ENCODE measurements at regions of chr6 and their contacts with region 1.

Region 1: DNA sequence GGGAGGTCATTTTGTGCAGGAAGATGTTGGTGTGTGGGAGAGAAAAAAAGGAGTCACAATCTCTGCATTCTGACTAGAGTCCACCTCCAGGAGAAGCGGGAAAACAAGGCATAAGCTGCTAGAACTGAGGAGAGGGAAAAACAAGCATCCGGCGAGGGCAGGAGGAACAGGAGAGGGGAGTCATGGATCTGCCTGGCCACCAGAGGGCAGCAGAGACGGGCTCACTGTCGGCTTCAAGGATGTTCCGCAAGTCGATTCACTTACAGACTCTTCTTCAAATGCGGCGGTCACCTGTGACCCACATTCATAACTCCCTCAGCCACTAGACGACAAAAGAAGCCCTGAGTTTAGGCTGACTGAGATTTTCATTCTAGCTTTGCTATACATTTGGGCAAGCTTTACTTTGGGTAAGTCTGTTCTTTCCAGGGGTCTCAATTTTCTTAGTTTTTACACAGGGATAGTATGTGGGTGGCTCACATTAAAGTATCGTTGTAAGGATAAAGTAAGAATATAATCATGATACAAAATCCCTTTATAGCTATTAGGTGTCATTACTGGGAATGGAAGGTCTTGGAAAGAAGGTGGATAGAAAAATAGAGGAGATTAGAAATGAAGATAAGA is 6.6 kb upstream of the BTNL2 start:
- DNase-seq: peak; percentile 80
- ATAC-seq: peak; percentile 88
- H3K4me3 Mint-ChIP-seq: peak overlapping the region; percentile 75
- H3K27ac Mint-ChIP-seq: peak overlapping the region; percentile 5
- H3K4me1 Mint-ChIP-seq: peaks cover 14% of the 10 kb centered on the region
- H3K27me3 Mint-ChIP-seq: peaks cover 4% of the 10 kb centered on the region
- CTCF ChIP-seq: no peak

Region 2: GRCh38 chr6:32244946-32245398 is 168.6 kb before region 1 on chr6:
- CTCF ChIA-PET with region 1: interaction called, 64 read pairs
- POLR2A ChIA-PET with region 1: no interaction called
- intact Hi-C with region 1: loop called (anchors 1 kb)
- DNase-seq: peak; percentile 77
- ATAC-seq: peak; percentile 91
- H3K4me3 Mint-ChIP-seq: peak overlapping the region; percentile 81
- H3K27ac Mint-ChIP-seq: peak overlapping the region; percentile 50
- H3K4me1 Mint-ChIP-seq: peaks cover 16% of the 10 kb centered on the region
- H3K27me3 Mint-ChIP-seq: no peaks in the 10 kb centered on the region
- CTCF ChIP-seq: no peak

Region 3: DNA sequence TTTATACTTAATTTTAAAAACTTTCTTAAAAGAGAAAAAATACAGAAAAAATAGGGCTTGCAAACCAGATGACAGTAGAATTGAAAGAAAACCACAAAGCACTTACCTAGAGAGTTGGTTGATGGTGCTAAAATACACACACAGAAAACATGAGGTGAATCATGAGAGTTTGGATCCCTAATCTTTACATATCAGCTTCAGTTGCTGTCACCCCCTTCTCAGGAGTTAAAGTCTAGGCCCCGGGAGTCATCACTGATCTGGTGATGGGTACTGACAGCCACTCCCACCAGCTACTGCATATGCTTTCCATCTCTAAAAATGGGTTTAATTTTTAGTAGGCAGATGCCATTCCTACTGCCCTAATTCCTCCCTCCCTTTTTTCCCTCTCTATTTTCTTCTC is 58.5 kb before region 1 on chr6:
- CTCF ChIA-PET with region 1: no interaction called
- POLR2A ChIA-PET with region 1: no interaction called
- intact Hi-C with region 1: no loop called
- DNase-seq: no peak
- ATAC-seq: no peak
- H3K4me3 Mint-ChIP-seq: no peak overlapping the region
- H3K27ac Mint-ChIP-seq: no peak overlapping the region
- H3K4me1 Mint-ChIP-seq: peaks cover 12% of the 10 kb centered on the region
- H3K27me3 Mint-ChIP-seq: no peaks in the 10 kb centered on the region
- CTCF ChIP-seq: no peak

Region 4: GRCh38 chr6:32402812-32403211 is 10.7 kb before region 1 on chr6:
- CTCF ChIA-PET with region 1: interaction called, 13 read pairs
- POLR2A ChIA-PET with region 1: no interaction called
- intact Hi-C with region 1: no loop called
- DNase-seq: no peak
- ATAC-seq: no peak
- H3K4me3 Mint-ChIP-seq: no peak overlapping the region
- H3K27ac Mint-ChIP-seq: no peak overlapping the region
- H3K4me1 Mint-ChIP-seq: peaks cover 9% of the 10 kb centered on the region
- H3K27me3 Mint-ChIP-seq: peaks cover 2% of the 10 kb centered on the region
- CTCF ChIP-seq: no peak

Region 5: GRCh38 chr6:32432050-32432450 is 18.5 kb after region 1 on chr6:
- CTCF ChIA-PET with region 1: interaction called, 22 read pairs
- POLR2A ChIA-PET with region 1: interaction called, 4 read pairs
- intact Hi-C with region 1: loop called (anchors 1 kb)
- DNase-seq: no peak
- ATAC-seq: peak; percentile 43
- H3K4me3 Mint-ChIP-seq: no peak overlapping the region
- H3K27ac Mint-ChIP-seq: peak overlapping the region; percentile 24
- H3K4me1 Mint-ChIP-seq: peaks cover 33% of the 10 kb centered on the region
- H3K27me3 Mint-ChIP-seq: no peaks in the 10 kb centered on the region
- CTCF ChIP-seq: peak; percentile 65

Region 6: DNA sequence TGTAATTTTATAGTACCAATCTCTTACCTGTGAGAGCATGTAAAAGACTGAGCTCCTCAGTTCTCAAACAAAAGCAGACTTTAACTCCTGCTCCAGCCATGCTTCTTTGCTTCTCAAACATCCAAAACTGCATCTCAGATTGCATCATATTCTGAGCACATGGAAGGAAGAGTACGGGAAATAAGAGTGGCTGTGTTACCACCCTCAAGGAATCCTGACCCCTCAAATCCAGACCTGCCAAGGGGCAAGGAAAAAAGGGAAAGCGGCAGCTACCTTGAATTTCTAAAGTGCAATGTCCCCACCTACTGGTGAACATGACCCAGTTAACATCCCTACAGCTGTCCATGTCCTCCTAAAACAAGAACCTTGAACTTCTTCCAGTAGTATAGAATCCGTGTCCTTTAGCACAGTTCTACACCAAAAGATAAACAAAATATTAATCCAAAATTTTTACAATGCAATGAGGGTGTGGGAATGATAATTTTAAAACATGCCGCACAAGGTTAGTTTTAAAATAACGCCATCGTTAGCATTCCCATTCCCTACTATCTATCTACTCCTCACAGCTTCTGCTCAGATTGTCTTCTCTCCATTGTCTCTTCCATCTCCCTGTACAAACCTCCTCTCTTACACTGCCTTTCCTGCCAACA is 287.0 kb after region 1 on chr6:
- CTCF ChIA-PET with region 1: interaction called, 47 read pairs
- POLR2A ChIA-PET with region 1: no interaction called
- intact Hi-C with region 1: loop called (anchors 1 kb)
- DNase-seq: no peak
- ATAC-seq: peak; percentile 80
- H3K4me3 Mint-ChIP-seq: peak overlapping the region; percentile 86
- H3K27ac Mint-ChIP-seq: peak overlapping the region; percentile 91
- H3K4me1 Mint-ChIP-seq: peaks cover 32% of the 10 kb centered on the region
- H3K27me3 Mint-ChIP-seq: no peaks in the 10 kb centered on the region
- CTCF ChIP-seq: peak; percentile 32

Region 7: GRCh38 chr6:32785781-32786533 is 372.4 kb after region 1 on chr6:
- CTCF ChIA-PET with region 1: interaction called, 149 read pairs
- POLR2A ChIA-PET with region 1: no interaction called
- intact Hi-C with region 1: loop called (anchors 1 kb)
- DNase-seq: no peak
- ATAC-seq: peak; percentile 88
- H3K4me3 Mint-ChIP-seq: no peak overlapping the region
- H3K27ac Mint-ChIP-seq: no peak overlapping the region
- H3K4me1 Mint-ChIP-seq: peaks cover 2% of the 10 kb centered on the region
- H3K27me3 Mint-ChIP-seq: no peaks in the 10 kb centered on the region
- CTCF ChIP-seq: no peak

Region 8: GRCh38 chr6:32947552-32948465 is 534.3 kb after region 1 on chr6:
- CTCF ChIA-PET with region 1: no interaction called
- POLR2A ChIA-PET with region 1: no interaction called
- intact Hi-C with region 1: no loop called
- DNase-seq: no peak
- ATAC-seq: no peak
- H3K4me3 Mint-ChIP-seq: peak overlapping the region; percentile 98
- H3K27ac Mint-ChIP-seq: peak overlapping the region; percentile 99
- H3K4me1 Mint-ChIP-seq: peaks cover 94% of the 10 kb centered on the region
- H3K27me3 Mint-ChIP-seq: no peaks in the 10 kb centered on the region
- CTCF ChIP-seq: no peak

Region 9: GRCh38 chr6:33075568-33076405 is 662.2 kb after region 1 on chr6 and contains the start of gene HLA-DPB1:
- CTCF ChIA-PET with region 1: no interaction called
- POLR2A ChIA-PET with region 1: no interaction called
- intact Hi-C with region 1: no loop called
- DNase-seq: peak; percentile 42
- ATAC-seq: peak; percentile 76
- H3K4me3 Mint-ChIP-seq: peak within 1 kb of the TSS; percentile 95
- H3K27ac Mint-ChIP-seq: peak within 1 kb of the TSS; percentile 99
- H3K4me1 Mint-ChIP-seq: peaks cover 66% of the 10 kb centered on the region
- H3K27me3 Mint-ChIP-seq: no peaks in the 10 kb centered on the region
- CTCF ChIP-seq: no peak
- total RNA-seq, gene HLA-DPB1: 853 and 854 TPM in 2 replicates

Measured in activated B cell treated with CpG ODN at 0.5 μM for 24 hours (primary cell).